Sigmoid colon (tissue), 7 donors: ENCODE measurements at regions of chr6 and their contacts with region 1.

Region 1: DNA sequence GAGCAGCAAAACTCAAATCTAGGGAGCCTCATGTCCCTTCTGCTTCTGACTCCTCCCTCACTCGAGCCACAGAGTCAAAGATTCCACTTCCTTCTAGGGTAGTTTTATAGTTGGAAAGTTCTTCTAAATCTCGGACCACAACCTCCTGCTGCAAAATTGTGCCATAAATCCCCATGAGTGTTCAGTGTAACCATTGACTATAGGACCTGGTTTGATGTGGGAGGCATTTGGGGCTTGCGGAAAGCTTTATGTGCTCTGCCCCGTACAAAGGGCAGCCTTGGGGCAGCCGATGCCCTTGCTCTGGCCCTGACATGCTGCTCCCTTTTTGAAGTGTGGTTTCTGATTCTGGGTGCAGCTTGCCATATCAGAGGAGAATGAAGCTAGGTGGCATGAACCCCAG is 43.6 kb upstream of the IER3 start:
- DNase-seq: peak; percentile 64
- H3K4me3 ChIP-seq: no peak overlapping the region
- H3K27ac ChIP-seq: peak overlapping the region in 3 of 4 donors; percentile 58 to 79 (median 70)
- H3K4me1 ChIP-seq: peaks cover 0 to 19% (median 17%) of the 10 kb centered on the region in 4 donors
- H3K27me3 ChIP-seq: no peaks in the 10 kb centered on the region
- CTCF ChIP-seq: no peak
- EP300 ChIP-seq: peak in 1 of 4 donors; percentile 36
- POLR2A ChIP-seq: no peak

Region 2: GRCh38 chr6:30212865-30213666 is 574.9 kb before region 1 on chr6 and contains the start of gene TRIM26:
- intact Hi-C with region 1: no loop called
- DNase-seq: peak; percentile 99
- H3K4me3 ChIP-seq: peak within 1 kb of the TSS; percentile 91 to 96 (median 93)
- H3K27ac ChIP-seq: peak within 1 kb of the TSS; percentile 95 to 98 (median 98)
- H3K4me1 ChIP-seq: peaks cover 0 to 43% (median 34%) of the 10 kb centered on the region in 4 donors
- H3K27me3 ChIP-seq: no peaks in the 10 kb centered on the region
- CTCF ChIP-seq: no peak
- EP300 ChIP-seq: no peak
- POLR2A ChIP-seq: peak; percentile 92 to 96
- total RNA-seq, gene TRIM26: 34.2 to 42.7 (median 41.4) TPM

Region 3: DNA sequence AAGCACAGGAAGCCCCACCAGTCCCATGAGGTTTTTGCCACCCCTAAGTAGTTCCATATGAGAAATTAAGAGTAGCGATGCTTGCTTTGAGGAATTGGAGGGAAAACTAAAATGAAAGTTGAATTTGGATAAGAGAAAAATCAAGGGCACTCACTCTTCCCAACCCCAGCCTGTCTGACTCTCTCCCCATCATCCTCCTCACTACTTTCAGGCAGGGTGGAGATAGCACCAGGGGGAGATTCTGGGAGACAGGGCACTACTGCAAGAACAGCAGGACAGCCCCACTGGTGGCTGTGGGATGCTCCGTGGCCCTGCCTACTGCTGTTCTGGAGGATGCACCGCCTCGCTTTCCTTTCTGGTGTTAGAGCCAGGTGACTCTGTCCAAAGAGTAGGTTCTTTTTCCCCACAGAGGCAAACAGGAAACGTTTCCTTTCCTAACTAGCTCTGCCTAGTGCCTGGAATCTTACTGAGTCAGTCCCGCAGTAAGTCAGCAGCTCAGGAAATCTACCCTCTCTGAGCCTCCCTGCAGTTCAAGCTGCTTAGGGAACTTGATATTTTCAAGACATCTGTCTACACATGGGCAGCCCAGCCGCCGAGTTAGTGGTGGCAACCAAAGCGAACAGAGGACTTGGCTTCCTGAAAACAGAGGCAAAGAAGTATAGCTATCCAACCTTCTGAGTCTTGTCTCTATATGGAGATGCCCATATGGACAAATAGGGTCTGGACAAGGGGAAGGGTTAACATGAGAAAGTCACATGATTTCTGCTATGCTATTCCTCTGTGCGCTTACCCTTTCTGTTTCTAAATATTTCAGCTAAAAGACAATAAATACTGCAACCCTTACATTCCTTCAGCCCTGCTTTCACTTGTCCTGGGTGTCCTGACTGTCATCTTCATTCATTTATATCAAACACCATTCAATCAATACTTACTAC is 287.3 kb before region 1 on chr6:
- intact Hi-C with region 1: no loop called
- DNase-seq: no peak
- H3K4me3 ChIP-seq: no peak overlapping the region
- H3K27ac ChIP-seq: peak overlapping the region in 3 of 4 donors; percentile 17 to 65 (median 28)
- H3K4me1 ChIP-seq: no peaks in the 10 kb centered on the region
- H3K27me3 ChIP-seq: no peaks in the 10 kb centered on the region
- CTCF ChIP-seq: no peak
- EP300 ChIP-seq: no peak
- POLR2A ChIP-seq: no peak

Region 4: DNA sequence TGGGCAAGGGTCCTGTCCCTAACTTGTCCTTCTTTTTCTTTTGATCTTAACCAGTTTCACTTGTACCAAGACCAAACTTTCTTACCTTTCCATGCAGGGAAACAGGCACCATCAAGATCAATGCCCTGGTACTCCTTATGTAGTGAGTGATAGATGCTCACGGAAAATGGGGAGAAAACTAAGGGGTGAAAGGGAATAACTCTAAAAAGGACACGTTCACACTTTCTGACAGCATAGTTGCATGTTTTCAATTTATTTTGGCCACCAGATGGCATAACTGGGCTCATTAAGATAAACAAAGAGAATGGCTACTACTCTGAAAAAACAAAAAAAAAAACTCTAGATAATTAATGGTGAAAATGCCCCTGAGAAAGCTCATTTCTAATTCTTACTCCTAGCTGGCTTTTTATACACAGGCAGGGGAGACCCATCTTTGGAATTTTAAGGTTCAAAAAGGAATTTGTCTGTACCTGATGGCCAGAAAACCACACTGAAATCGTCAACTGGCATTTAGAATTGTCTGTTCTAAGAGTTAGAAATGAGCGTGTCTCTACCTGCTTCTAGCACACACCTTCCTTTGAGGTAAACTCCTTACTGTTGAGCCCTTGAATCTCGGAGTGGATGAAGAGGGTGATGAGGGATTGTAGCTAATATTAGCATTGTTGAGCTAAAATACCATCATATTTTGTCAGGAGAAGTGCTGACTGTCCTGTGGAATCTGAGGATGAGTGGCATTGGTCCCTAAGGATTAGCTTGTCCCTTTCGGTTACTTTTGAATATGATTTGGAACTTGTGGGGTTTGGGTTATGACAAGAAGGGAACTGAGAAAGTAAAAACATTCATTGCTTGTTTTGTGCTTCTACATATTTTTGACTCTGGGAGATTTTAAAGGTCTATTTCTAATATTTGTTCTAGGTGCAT is 34.2 kb after region 1 on chr6:
- intact Hi-C with region 1: loop called (anchors 5 kb)
- DNase-seq: no peak
- H3K4me3 ChIP-seq: no peak overlapping the region
- H3K27ac ChIP-seq: peak overlapping the region in 3 of 4 donors; percentile 14 to 69 (median 60)
- H3K4me1 ChIP-seq: peaks cover 0 to 34% (median 17%) of the 10 kb centered on the region in 4 donors
- H3K27me3 ChIP-seq: no peaks in the 10 kb centered on the region
- CTCF ChIP-seq: peak in 2 of 4 experiments; percentile 35 to 36
- EP300 ChIP-seq: no peak
- POLR2A ChIP-seq: no peak